HepG2 (cell line): ENCODE measurements at regions of chr1 and their contacts with region 1.

Region 1: GRCh38 chr1:204363335-204364124 is 3.8 kb upstream of the PLEKHA6 start:
- DNase-seq: peak; percentile 50
- ATAC-seq: peak; percentile 64
- H3K4me3 ChIP-seq: no peak overlapping the region
- H3K27ac ChIP-seq: no peak overlapping the region
- H3K4me1 ChIP-seq: peaks cover 20% of the 10 kb centered on the region
- H3K27me3 ChIP-seq: no peaks in the 10 kb centered on the region
- CTCF ChIP-seq: peak; percentile 97
- EP300 ChIP-seq: no peak
- POLR2A ChIP-seq: no peak
- RAD21 ChIP-seq: peak; percentile 95

Region 2: GRCh38 chr1:204162231-204163074 is 201.1 kb before region 1 on chr1:
- CTCF ChIA-PET with region 1: interaction called, 16 read pairs
- POLR2A ChIA-PET with region 1: no interaction called
- in situ Hi-C with region 1: loop called (anchors 5 kb)
- intact Hi-C with region 1: no loop called
- DNase-seq: peak; percentile 60
- ATAC-seq: peak; percentile 92
- H3K4me3 ChIP-seq: no peak overlapping the region
- H3K27ac ChIP-seq: no peak overlapping the region
- H3K4me1 ChIP-seq: peaks cover 36% of the 10 kb centered on the region
- H3K27me3 ChIP-seq: peaks cover 5 to 30% of the 10 kb centered on the region in 2 experiments; a peak in 3 of 5 replicates
- CTCF ChIP-seq: peak; percentile 97
- EP300 ChIP-seq: no peak
- POLR2A ChIP-seq: no peak
- RAD21 ChIP-seq: peak; percentile 96

Region 3: DNA sequence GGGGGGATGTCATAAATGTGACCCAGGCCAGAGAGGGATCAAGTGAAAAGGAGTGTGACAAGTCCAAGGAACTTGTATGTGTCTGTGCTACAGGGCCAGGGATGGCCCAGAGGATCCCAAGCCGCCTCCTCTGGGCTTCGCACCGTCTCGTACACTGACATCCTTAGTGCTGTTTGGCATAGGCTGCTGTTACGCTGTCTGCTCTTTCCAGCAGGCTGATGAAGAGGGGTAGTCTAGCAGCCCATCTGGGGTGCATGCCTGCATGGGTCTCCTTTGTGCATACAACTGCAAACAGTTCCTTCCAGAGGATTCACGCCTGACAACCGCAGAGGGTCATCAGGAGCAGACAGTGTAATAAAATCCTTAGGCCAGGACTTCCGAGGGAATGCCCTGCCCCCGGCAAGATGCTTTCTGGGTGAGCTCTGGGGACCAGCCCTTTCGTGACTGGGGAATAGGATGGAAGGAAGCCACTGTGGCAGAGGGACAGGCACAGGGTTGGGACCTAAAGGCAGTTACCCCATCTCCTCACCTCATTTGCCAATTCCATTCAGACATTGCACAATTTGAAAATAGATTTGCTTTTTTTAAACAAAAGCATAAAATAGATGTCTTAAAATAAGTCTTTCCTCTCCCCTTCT is 143.4 kb before region 1 on chr1:
- CTCF ChIA-PET with region 1: interaction called, 29 read pairs
- POLR2A ChIA-PET with region 1: no interaction called
- in situ Hi-C with region 1: no loop called
- intact Hi-C with region 1: loop called (anchors 1 kb)
- DNase-seq: no peak
- ATAC-seq: no peak
- H3K4me3 ChIP-seq: no peak overlapping the region
- H3K27ac ChIP-seq: no peak overlapping the region
- H3K4me1 ChIP-seq: no peaks in the 10 kb centered on the region
- H3K27me3 ChIP-seq: no peaks in the 10 kb centered on the region
- CTCF ChIP-seq: no peak
- EP300 ChIP-seq: no peak
- POLR2A ChIP-seq: no peak
- RAD21 ChIP-seq: no peak

Region 4: DNA sequence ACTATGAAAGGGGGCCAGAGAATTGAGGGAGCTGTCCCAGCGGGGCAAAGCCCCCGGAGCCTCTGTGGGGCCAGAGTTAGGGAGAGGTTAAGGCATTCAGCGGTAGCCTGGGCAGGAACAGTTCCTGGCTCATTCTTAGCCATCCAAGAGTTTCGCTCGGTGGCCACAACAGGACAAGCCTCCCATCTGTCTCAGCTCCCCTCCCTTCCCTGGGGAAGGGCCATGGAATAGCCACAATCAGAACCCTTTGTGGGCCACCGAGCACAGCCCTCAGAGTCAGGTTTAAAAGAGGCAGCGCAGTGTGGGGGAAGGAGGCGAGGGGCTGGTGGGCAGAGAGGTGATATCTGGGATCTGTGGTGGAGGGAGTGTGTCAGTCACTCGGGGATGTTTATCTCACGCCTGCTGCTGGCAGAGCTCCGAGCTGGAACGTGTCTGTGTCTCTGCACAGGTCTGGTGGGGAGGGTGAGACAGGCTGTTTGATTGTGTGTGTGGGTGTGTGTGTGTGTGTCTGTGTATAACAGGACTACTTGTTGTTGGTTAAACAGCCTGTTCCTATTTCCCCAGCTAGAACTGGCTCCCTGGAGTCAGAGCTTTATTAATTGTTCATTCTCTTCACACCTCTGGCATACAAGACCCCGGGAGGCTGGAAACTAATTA is 100.1 kb before region 1 on chr1:
- CTCF ChIA-PET with region 1: interaction called, 25 read pairs
- POLR2A ChIA-PET with region 1: no interaction called
- in situ Hi-C with region 1: loop called (anchors 5 kb)
- intact Hi-C with region 1: loop called (anchors 1 kb)
- DNase-seq: no peak
- ATAC-seq: no peak
- H3K4me3 ChIP-seq: no peak overlapping the region
- H3K27ac ChIP-seq: no peak overlapping the region
- H3K4me1 ChIP-seq: peaks cover 47% of the 10 kb centered on the region
- H3K27me3 ChIP-seq: no peaks in the 10 kb centered on the region
- CTCF ChIP-seq: no peak
- EP300 ChIP-seq: no peak
- POLR2A ChIP-seq: no peak
- RAD21 ChIP-seq: no peak